Activated CD4-positive, alpha-beta T cell treated with anti-CD3 and anti-CD28 coated beads for 36 hours (primary cell): ENCODE measurements at regions of chr9 and their contacts with region 1.

Region 1: DNA sequence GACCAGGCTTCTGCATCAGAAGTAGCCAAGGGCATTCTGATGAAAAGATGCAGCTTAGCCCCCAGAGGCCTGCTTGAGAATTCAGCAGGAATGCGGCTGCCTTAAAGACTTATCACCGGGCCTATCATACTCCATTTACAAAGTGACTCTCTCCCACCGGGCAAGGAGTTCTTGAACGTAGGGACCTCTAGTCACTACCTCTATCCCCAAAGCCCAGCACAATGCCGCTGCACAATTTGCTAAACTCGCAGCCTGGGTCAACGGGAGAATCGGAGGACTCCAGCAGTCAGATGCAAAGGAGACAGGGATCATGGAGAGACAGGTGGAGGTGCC is 661 bp downstream of the PDCL start:
- DNase-seq: peak; percentile 22
- ATAC-seq: peak; percentile 1
- H3K4me3 Mint-ChIP-seq: peak overlapping the region; percentile 92
- H3K27ac Mint-ChIP-seq: peak overlapping the region; percentile 90
- H3K4me1 Mint-ChIP-seq: peaks cover 31% of the 10 kb centered on the region
- H3K27me3 Mint-ChIP-seq: no peaks in the 10 kb centered on the region

Region 2: GRCh38 chr9:122071715-122072114 is 756.0 kb before region 1 on chr9:
- CTCF ChIA-PET with region 1: no interaction called
- POLR2A ChIA-PET with region 1: interaction called, 12 read pairs
- intact Hi-C with region 1: no loop called
- DNase-seq: no peak
- ATAC-seq: no peak
- H3K4me3 Mint-ChIP-seq: no peak overlapping the region
- H3K27ac Mint-ChIP-seq: no peak overlapping the region
- H3K4me1 Mint-ChIP-seq: no peaks in the 10 kb centered on the region
- H3K27me3 Mint-ChIP-seq: no peaks in the 10 kb centered on the region

Region 3: DNA sequence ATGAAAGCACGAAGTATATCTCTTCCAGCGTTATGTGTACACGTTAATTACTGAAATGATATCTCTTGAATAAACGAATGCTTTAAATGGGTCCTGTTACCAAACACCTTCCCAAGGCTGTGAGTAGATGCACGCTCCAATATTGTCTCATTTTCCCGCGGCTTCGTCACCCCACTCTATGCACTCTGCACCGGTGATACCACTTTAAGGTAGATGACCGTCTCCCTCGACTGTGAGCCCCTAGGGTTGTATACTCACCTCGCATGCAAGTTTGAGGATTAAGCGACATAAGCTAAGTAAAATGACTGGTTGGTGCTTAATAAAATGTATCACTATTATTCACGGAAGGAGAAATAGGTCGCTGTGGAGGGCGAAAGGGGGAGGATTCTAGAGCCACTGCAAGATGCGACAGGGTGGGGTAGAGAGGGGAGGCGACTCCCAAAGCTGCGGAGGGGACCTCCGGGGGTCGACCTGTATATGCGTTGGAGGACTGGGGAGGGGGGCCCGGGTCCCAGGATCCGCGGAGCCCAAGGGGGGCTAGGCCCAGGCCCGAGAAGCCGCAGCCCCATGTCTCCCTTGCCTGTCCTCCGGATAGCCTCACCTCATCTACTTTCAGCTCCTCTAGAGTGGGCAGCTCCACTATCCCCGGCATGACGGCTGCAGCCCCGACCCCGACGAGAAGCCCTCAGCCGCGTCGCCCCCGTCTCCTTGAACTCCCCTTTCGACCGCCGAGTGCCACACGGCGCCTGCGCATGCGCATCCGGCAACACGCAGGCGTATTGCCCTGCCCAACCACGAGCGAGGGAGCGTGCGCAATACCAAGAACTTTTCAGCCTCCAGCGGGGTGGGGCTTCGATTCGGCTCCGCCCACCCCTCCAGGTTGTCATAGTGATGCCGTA is 668.5 kb before region 1 on chr9 and contains the starts of genes MORN5 and NDUFA8:
- CTCF ChIA-PET with region 1: no interaction called
- POLR2A ChIA-PET with region 1: no interaction called
- intact Hi-C with region 1: loop called in 1 of 2 experiments (anchors 1 kb)
- DNase-seq: peak; percentile 98
- ATAC-seq: peak; percentile 97
- H3K4me3 Mint-ChIP-seq: peak within 1 kb of the TSS; percentile 95
- H3K27ac Mint-ChIP-seq: peak within 1 kb of the TSS; percentile 96
- H3K4me1 Mint-ChIP-seq: peaks cover 33% of the 10 kb centered on the region
- H3K27me3 Mint-ChIP-seq: peaks cover 13% of the 10 kb centered on the region
- total RNA-seq, gene MORN5: not detected
- total RNA-seq, gene NDUFA8: 50.4 to 57.2 TPM

Region 4: DNA sequence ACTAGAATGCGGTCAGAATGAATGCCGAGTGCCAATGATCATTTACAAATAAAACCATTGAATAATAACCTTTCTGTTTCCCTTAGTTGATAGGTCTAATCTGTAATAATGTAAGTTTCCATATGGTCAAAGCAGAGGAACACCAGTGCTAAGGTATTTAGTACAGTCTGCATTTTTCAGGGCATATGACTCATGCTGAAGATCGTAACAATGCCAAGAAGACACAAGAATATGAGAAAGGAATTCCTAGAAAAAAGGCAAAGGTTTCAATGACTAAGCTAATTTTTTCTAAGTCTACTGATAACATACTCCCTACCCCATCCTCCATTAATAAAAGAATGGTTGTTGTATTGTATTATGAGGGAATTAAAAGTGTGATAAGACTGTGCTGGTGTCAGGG is 247.4 kb before region 1 on chr9:
- CTCF ChIA-PET with region 1: no interaction called
- POLR2A ChIA-PET with region 1: no interaction called
- intact Hi-C with region 1: no loop called
- DNase-seq: no peak
- ATAC-seq: no peak
- H3K4me3 Mint-ChIP-seq: no peak overlapping the region
- H3K27ac Mint-ChIP-seq: no peak overlapping the region
- H3K4me1 Mint-ChIP-seq: no peaks in the 10 kb centered on the region
- H3K27me3 Mint-ChIP-seq: peaks cover 2% of the 10 kb centered on the region

Region 5: GRCh38 chr9:122800066-122801060 is 27.4 kb before region 1 on chr9 and contains the start of gene OR1K1:
- CTCF ChIA-PET with region 1: no interaction called
- POLR2A ChIA-PET with region 1: no interaction called
- intact Hi-C with region 1: no loop called
- DNase-seq: no peak
- ATAC-seq: no peak
- H3K4me3 Mint-ChIP-seq: no peak within 1 kb of the TSS
- H3K27ac Mint-ChIP-seq: no peak within 1 kb of the TSS
- H3K4me1 Mint-ChIP-seq: no peaks in the 10 kb centered on the region
- H3K27me3 Mint-ChIP-seq: no peaks in the 10 kb centered on the region
- total RNA-seq, gene OR1K1: not detected

Region 6: GRCh38 chr9:122904823-122905710 is 77.3 kb after region 1 on chr9 and contains the start of gene RC3H2:
- CTCF ChIA-PET with region 1: interaction called, 7 read pairs
- POLR2A ChIA-PET with region 1: no interaction called
- intact Hi-C with region 1: loop called (anchors 1 to 5 kb)
- DNase-seq: peak; percentile 97
- ATAC-seq: peak; percentile 93
- H3K4me3 Mint-ChIP-seq: peak within 1 kb of the TSS; percentile 92
- H3K27ac Mint-ChIP-seq: peak within 1 kb of the TSS; percentile 94
- H3K4me1 Mint-ChIP-seq: peaks cover 23% of the 10 kb centered on the region
- H3K27me3 Mint-ChIP-seq: no peaks in the 10 kb centered on the region
- total RNA-seq, gene RC3H2: 21.5 to 24.4 TPM

Region 7: GRCh38 chr9:122931226-122932121 is 103.7 kb after region 1 on chr9 and contains the start of gene ZBTB26:
- CTCF ChIA-PET with region 1: interaction called, 3 read pairs
- POLR2A ChIA-PET with region 1: no interaction called
- intact Hi-C with region 1: loop called in 1 of 2 experiments (anchors 1 kb)
- DNase-seq: peak; percentile 95
- ATAC-seq: peak; percentile 99
- H3K4me3 Mint-ChIP-seq: no peak within 1 kb of the TSS
- H3K27ac Mint-ChIP-seq: peak within 1 kb of the TSS; percentile 98
- H3K4me1 Mint-ChIP-seq: peaks cover 12% of the 10 kb centered on the region
- H3K27me3 Mint-ChIP-seq: no peaks in the 10 kb centered on the region
- total RNA-seq, gene ZBTB26: 6.0 TPM

Region 8: GRCh38 chr9:122991370-122991830 is 163.7 kb after region 1 on chr9:
- CTCF ChIA-PET with region 1: no interaction called
- POLR2A ChIA-PET with region 1: no interaction called
- intact Hi-C with region 1: loop called in 1 of 2 experiments (anchors 1 kb)
- DNase-seq: peak; percentile 66
- ATAC-seq: peak; percentile 90
- H3K4me3 Mint-ChIP-seq: no peak overlapping the region
- H3K27ac Mint-ChIP-seq: no peak overlapping the region
- H3K4me1 Mint-ChIP-seq: peaks cover 7% of the 10 kb centered on the region
- H3K27me3 Mint-ChIP-seq: no peaks in the 10 kb centered on the region

Region 9: DNA sequence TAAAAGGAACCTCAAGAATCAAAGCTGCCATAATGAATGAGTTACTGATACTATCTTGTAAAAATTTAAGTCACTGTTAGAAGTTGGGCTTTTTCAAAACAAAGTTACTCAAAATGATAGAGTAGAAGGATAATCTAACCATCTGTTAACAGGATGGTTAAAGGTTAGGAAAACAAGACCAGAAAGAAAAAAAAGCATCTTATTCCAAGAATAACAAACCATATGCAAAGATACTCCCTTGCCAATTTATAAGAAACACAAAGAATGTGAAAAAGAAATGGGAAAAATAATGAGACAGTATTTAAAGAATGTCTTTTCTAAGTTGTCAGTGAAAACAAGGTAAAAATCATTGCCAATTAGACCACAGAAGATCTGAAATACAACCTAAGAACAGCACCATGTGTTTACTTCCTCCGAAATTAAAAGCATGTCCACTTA is 389.4 kb after region 1 on chr9:
- CTCF ChIA-PET with region 1: no interaction called
- POLR2A ChIA-PET with region 1: no interaction called
- intact Hi-C with region 1: no loop called
- DNase-seq: no peak
- ATAC-seq: no peak
- H3K4me3 Mint-ChIP-seq: no peak overlapping the region
- H3K27ac Mint-ChIP-seq: no peak overlapping the region
- H3K4me1 Mint-ChIP-seq: peaks cover 12% of the 10 kb centered on the region
- H3K27me3 Mint-ChIP-seq: no peaks in the 10 kb centered on the region

Region 10: GRCh38 chr9:123322273-123323195 is 494.8 kb after region 1 on chr9:
- CTCF ChIA-PET with region 1: no interaction called
- POLR2A ChIA-PET with region 1: no interaction called
- intact Hi-C with region 1: no loop called
- DNase-seq: peak; percentile 79
- ATAC-seq: peak; percentile 89
- H3K4me3 Mint-ChIP-seq: peak overlapping the region; percentile 39
- H3K27ac Mint-ChIP-seq: peak overlapping the region; percentile 92
- H3K4me1 Mint-ChIP-seq: peaks cover 35% of the 10 kb centered on the region
- H3K27me3 Mint-ChIP-seq: no peaks in the 10 kb centered on the region